CD4-positive, alpha-beta T cell (primary cell): ENCODE measurements at regions of chr6 and their contacts with region 1.

Region 1: GRCh38 chr6:37691904-37692806 is 5.5 kb downstream of the MDGA1 start:
- DNase-seq: peak; percentile 53 to 86 (median 76)
- ATAC-seq: peak; percentile 91
- H3K4me3 ChIP-seq: no peak overlapping the region
- H3K4me3 Mint-ChIP-seq: no peak overlapping the region
- H3K27ac ChIP-seq: no peak overlapping the region
- H3K27ac Mint-ChIP-seq: no peak overlapping the region
- H3K4me1 ChIP-seq: peaks cover 33% of the 10 kb centered on the region
- H3K4me1 Mint-ChIP-seq: peaks cover 12% of the 10 kb centered on the region
- H3K27me3 ChIP-seq: peaks cover 16 to 30% of the 10 kb centered on the region in 2 experiments
- H3K27me3 Mint-ChIP-seq: peaks cover 53% of the 10 kb centered on the region
- CTCF ChIP-seq: peak; percentile 90

Region 2: GRCh38 chr6:37324131-37325033 is 367.8 kb before region 1 on chr6:
- CTCF ChIA-PET with region 1: interaction called, 5 read pairs
- POLR2A ChIA-PET with region 1: no interaction called
- intact Hi-C with region 1: loop called (anchors 1 kb)
- DNase-seq: peak in 2 of 14 experiments; percentile 7 to 8
- ATAC-seq: no peak
- H3K4me3 ChIP-seq: no peak overlapping the region
- H3K4me3 Mint-ChIP-seq: no peak overlapping the region
- H3K27ac ChIP-seq: no peak overlapping the region
- H3K27ac Mint-ChIP-seq: peak overlapping the region; percentile 16
- H3K4me1 ChIP-seq: no peaks in the 10 kb centered on the region
- H3K4me1 Mint-ChIP-seq: no peaks in the 10 kb centered on the region
- H3K27me3 ChIP-seq: no peaks in the 10 kb centered on the region
- H3K27me3 Mint-ChIP-seq: no peaks in the 10 kb centered on the region
- CTCF ChIP-seq: no peak

Region 3: GRCh38 chr6:37381579-37381978 is 310.6 kb before region 1 on chr6:
- CTCF ChIA-PET with region 1: interaction called, 4 read pairs
- POLR2A ChIA-PET with region 1: no interaction called
- intact Hi-C with region 1: loop called (anchors 1 to 2 kb)
- DNase-seq: peak in 7 of 14 experiments; percentile 1 to 74 (median 24)
- ATAC-seq: peak; percentile 41
- H3K4me3 ChIP-seq: no peak overlapping the region
- H3K4me3 Mint-ChIP-seq: no peak overlapping the region
- H3K27ac ChIP-seq: no peak overlapping the region
- H3K27ac Mint-ChIP-seq: no peak overlapping the region
- H3K4me1 ChIP-seq: no peaks in the 10 kb centered on the region
- H3K4me1 Mint-ChIP-seq: no peaks in the 10 kb centered on the region
- H3K27me3 ChIP-seq: no peaks in the 10 kb centered on the region
- H3K27me3 Mint-ChIP-seq: no peaks in the 10 kb centered on the region
- CTCF ChIP-seq: peak; percentile 57

Region 4: GRCh38 chr6:37483917-37484785 is 208.0 kb before region 1 on chr6:
- CTCF ChIA-PET with region 1: interaction called, 4 read pairs
- POLR2A ChIA-PET with region 1: no interaction called
- intact Hi-C with region 1: loop called (anchors 1 kb)
- DNase-seq: peak; percentile 62 to 89 (median 76)
- ATAC-seq: peak; percentile 65
- H3K4me3 ChIP-seq: no peak overlapping the region
- H3K4me3 Mint-ChIP-seq: no peak overlapping the region
- H3K27ac ChIP-seq: peak overlapping the region in 1 of 2 donors; percentile 50
- H3K27ac Mint-ChIP-seq: no peak overlapping the region
- H3K4me1 ChIP-seq: peaks cover 40% of the 10 kb centered on the region
- H3K4me1 Mint-ChIP-seq: peaks cover 14% of the 10 kb centered on the region
- H3K27me3 ChIP-seq: no peaks in the 10 kb centered on the region
- H3K27me3 Mint-ChIP-seq: no peaks in the 10 kb centered on the region
- CTCF ChIP-seq: peak; percentile 84

Region 5: GRCh38 chr6:37566111-37566949 is 125.8 kb before region 1 on chr6:
- CTCF ChIA-PET with region 1: no interaction called
- POLR2A ChIA-PET with region 1: no interaction called
- intact Hi-C with region 1: loop called in 1 of 2 experiments (anchors 2 kb)
- DNase-seq: peak; percentile 41 to 86 (median 70)
- ATAC-seq: peak; percentile 91
- H3K4me3 ChIP-seq: peak overlapping the region; percentile 56
- H3K4me3 Mint-ChIP-seq: peak overlapping the region; percentile 49
- H3K27ac ChIP-seq: no peak overlapping the region
- H3K27ac Mint-ChIP-seq: no peak overlapping the region
- H3K4me1 ChIP-seq: peaks cover 13% of the 10 kb centered on the region
- H3K4me1 Mint-ChIP-seq: peaks cover 12% of the 10 kb centered on the region
- H3K27me3 ChIP-seq: peaks cover 0 to 4% of the 10 kb centered on the region in 2 experiments
- H3K27me3 Mint-ChIP-seq: no peaks in the 10 kb centered on the region
- CTCF ChIP-seq: peak; percentile 93

Region 6: DNA sequence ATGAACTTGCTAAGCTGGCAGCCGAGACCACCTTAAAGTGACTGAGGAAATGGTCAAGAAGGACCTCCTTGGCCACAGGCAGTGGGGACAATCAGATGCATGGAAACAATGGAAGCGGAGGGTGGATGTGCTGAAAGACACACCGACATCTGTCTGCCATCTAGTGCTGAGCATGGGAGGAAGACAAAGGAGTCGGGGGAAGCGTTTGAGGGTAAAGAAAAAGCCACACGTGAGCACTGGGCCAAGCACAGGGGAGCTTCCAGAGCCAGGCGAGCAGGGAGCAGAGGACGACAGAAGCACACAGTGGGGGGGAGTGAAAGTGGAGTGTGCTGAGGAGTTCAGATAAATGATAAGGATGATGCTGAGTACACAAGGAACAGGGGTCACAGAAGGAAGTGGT is 495.2 kb after region 1 on chr6:
- CTCF ChIA-PET with region 1: no interaction called
- POLR2A ChIA-PET with region 1: no interaction called
- intact Hi-C with region 1: no loop called
- DNase-seq: no peak
- ATAC-seq: no peak
- H3K4me3 ChIP-seq: no peak overlapping the region
- H3K4me3 Mint-ChIP-seq: no peak overlapping the region
- H3K27ac ChIP-seq: no peak overlapping the region
- H3K27ac Mint-ChIP-seq: no peak overlapping the region
- H3K4me1 ChIP-seq: no peaks in the 10 kb centered on the region
- H3K4me1 Mint-ChIP-seq: no peaks in the 10 kb centered on the region
- H3K27me3 ChIP-seq: no peaks in the 10 kb centered on the region
- H3K27me3 Mint-ChIP-seq: no peaks in the 10 kb centered on the region
- CTCF ChIP-seq: no peak

Region 7: GRCh38 chr6:38671885-38672467 is 979.8 kb after region 1 on chr6:
- CTCF ChIA-PET with region 1: no interaction called
- POLR2A ChIA-PET with region 1: no interaction called
- intact Hi-C with region 1: loop called in 1 of 2 experiments (anchors 5 kb)
- DNase-seq: peak in 5 of 14 experiments; percentile 18 to 73 (median 61)
- ATAC-seq: peak; percentile 59
- H3K4me3 ChIP-seq: no peak overlapping the region
- H3K4me3 Mint-ChIP-seq: no peak overlapping the region
- H3K27ac ChIP-seq: no peak overlapping the region
- H3K27ac Mint-ChIP-seq: no peak overlapping the region
- H3K4me1 ChIP-seq: peaks cover 7% of the 10 kb centered on the region
- H3K4me1 Mint-ChIP-seq: peaks cover 25% of the 10 kb centered on the region
- H3K27me3 ChIP-seq: no peaks in the 10 kb centered on the region
- H3K27me3 Mint-ChIP-seq: no peaks in the 10 kb centered on the region
- CTCF ChIP-seq: peak; percentile 77